SK-N-SH (cell line): ENCODE measurements at regions of chr14 and their contacts with region 1.

Region 1: DNA sequence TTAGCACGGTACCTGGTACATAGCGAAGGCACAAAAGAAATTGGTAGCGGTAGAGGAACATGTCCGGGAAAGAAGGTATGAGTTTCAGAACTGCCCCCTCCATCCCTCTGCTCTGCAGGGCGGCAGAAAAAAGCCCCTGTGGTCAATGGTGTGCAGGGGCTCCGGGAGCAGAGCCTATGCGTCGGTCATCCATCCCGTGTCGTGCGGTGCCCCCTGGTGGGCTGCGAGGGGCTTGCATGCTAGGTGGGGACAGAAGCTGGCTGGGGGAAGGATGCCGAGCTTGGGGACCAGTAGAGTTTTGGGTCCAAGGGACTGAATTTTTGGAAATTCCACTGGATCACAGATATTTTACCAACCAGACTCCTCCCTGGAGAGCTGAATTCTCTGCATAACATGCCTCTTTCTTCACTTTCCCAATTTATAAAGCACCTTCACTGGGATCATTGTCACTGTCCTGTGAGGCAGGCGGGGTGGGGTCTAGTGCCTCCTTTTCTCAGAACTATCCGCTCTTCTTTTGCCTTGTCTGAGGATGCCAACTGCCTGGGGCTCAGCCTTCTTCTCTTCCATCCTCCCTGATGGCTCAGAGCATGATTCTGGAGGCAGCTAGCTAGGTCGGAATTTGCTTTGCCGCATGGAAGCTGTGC is 148.7 kb downstream of the SMOC1 start:
- DNase-seq: peak; percentile 88
- H3K4me3 ChIP-seq: peak overlapping the region in 1 of 2 experiments; percentile 50; a peak in 1 of 4 replicates
- H3K27ac ChIP-seq: no peak overlapping the region
- H3K4me1 ChIP-seq: no peaks in the 10 kb centered on the region
- H3K27me3 ChIP-seq: no peaks in the 10 kb centered on the region
- CTCF ChIP-seq: peak; percentile 60
- EP300 ChIP-seq: no peak
- RAD21 ChIP-seq: peak; percentile 97

Region 2: GRCh38 chr14:69818757-69819191 is 209.1 kb before region 1 on chr14:
- CTCF ChIA-PET with region 1: interaction called, 238 read pairs
- POLR2A ChIA-PET with region 1: interaction called, 6 read pairs
- DNase-seq: peak; percentile 76
- H3K4me3 ChIP-seq: peak overlapping the region in 1 of 2 experiments; percentile 16; a peak in 1 of 4 replicates
- H3K27ac ChIP-seq: no peak overlapping the region
- H3K4me1 ChIP-seq: no peaks in the 10 kb centered on the region
- H3K27me3 ChIP-seq: peaks cover 9% of the 10 kb centered on the region; the same call in 1 of the 2 replicates
- CTCF ChIP-seq: peak; percentile 93
- EP300 ChIP-seq: no peak
- RAD21 ChIP-seq: peak; percentile 97

Region 3: DNA sequence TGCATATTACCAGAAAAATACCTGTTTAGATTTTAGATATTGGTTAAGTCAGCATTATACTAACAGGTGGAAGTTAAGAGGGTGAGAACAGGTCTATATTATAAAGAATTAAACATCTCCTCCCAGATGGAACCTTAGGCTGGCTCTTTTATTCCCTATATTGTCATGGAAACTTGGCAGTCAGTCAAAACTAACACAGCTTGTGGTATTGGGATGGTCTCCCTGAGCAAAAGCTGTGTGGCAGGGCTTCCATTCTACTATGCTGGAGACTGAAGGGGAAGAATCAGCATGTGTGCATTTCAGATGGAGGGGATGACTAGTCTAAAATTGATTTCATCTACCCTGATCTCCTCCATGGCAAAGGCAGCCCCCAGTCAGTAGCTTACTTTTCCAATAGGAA is 82.0 kb before region 1 on chr14:
- CTCF ChIA-PET with region 1: interaction called, 39 read pairs
- POLR2A ChIA-PET with region 1: no interaction called
- DNase-seq: no peak
- H3K4me3 ChIP-seq: no peak overlapping the region
- H3K27ac ChIP-seq: no peak overlapping the region
- H3K4me1 ChIP-seq: peaks cover 0 to 44% of the 10 kb centered on the region in 2 experiments; a peak in 2 of 4 replicates
- H3K27me3 ChIP-seq: no peaks in the 10 kb centered on the region
- CTCF ChIP-seq: no peak
- EP300 ChIP-seq: no peak
- RAD21 ChIP-seq: no peak

Region 4: GRCh38 chr14:70013269-70013873 is 14.5 kb before region 1 on chr14:
- CTCF ChIA-PET with region 1: interaction called, 45 read pairs
- POLR2A ChIA-PET with region 1: no interaction called
- DNase-seq: peak; percentile 52
- H3K4me3 ChIP-seq: no peak overlapping the region; a peak in 1 of 4 replicates
- H3K27ac ChIP-seq: no peak overlapping the region
- H3K4me1 ChIP-seq: peaks cover 0 to 14% of the 10 kb centered on the region in 2 experiments; a peak in 1 of 4 replicates
- H3K27me3 ChIP-seq: no peaks in the 10 kb centered on the region; the same call in 1 of the 2 replicates
- CTCF ChIP-seq: peak; percentile 53
- EP300 ChIP-seq: no peak
- RAD21 ChIP-seq: peak; percentile 50

Region 5: DNA sequence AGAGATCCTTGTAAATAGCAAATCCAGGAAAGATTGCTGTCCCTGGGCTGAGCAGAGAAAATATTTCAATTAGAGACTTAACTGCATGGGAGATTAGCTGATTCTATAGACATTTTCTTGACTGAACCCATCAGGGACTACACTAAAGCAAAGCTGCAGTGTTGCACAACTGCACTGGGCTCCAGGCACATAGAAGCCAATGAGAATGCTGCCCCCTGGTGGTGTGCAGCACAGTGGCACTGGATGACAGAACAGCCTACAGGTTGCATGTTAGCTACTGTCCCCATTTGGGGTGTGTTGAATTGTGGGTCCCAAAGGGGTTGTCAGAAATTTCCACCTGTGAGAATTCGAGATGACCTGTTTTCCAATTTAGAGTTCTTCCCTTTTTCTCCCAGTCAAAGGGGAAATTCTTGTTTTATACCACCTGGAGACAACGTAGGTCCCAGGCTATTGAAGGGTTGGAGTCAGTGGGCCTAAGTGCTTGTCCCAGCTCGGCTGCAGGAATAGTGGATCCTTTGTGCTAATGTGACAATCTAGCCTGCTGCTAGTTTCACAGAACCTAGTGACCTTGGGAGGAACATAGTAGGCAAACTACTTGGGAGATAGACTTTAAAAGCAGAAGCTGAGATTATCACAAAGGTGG is 46.1 kb after region 1 on chr14:
- CTCF ChIA-PET with region 1: interaction called, 15 read pairs
- POLR2A ChIA-PET with region 1: no interaction called
- DNase-seq: peak; percentile 69
- H3K4me3 ChIP-seq: no peak overlapping the region; a peak in 1 of 4 replicates
- H3K27ac ChIP-seq: no peak overlapping the region; a peak in 1 of 4 replicates
- H3K4me1 ChIP-seq: peaks cover 0 to 31% of the 10 kb centered on the region in 2 experiments; a peak in 2 of 4 replicates
- H3K27me3 ChIP-seq: no peaks in the 10 kb centered on the region
- CTCF ChIP-seq: peak; percentile 73
- EP300 ChIP-seq: no peak
- RAD21 ChIP-seq: peak; percentile 82